MCF 10A (cell line): ENCODE measurements at regions of chr3 and their contacts with region 1.

Region 1: DNA sequence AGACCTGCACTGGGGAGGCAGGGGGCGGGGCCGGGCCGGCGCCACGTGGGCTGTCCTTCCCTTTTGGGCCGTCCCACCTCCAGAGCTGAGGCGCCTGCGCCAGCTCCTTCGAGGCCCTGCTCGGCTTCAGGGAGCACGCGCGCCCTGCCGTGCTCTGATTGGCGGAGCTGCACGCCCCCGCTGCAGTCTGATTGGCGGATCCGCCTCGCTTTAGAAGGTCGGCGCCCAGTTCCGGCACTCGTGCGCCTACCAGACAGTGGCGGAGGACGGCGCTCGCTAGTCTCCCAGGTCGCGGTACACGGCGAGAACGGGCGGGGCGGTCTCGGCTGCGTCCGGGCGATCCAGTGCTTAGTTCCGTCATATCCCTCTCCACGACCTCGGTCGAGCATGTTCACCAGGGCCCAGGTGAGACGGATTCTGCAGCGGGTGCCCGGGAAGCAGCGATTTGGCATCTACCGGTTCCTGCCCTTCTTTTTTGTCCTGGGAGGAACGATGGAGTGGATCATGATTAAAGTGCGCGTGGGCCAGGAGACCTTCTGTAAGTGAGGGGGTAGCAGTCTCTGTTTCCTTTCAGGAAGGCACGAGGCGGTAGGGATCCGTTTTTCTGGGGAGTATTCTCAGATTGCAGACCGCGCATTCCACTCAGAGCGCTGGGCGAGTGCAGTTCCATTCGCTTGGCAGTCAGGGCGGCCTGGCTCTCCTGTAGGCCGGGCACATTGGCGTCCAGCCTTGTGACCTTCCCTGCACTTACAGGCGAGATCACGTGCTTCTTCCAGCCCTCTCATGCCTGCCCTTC is at the start of gene UQCC5:
- DNase-seq: peak; percentile 98
- H3K4me3 Mint-ChIP-seq: peak within 1 kb of the TSS; percentile 84
- H3K27ac Mint-ChIP-seq: peak within 1 kb of the TSS; percentile 96
- H3K4me1 Mint-ChIP-seq: peaks cover 30% of the 10 kb centered on the region
- H3K27me3 Mint-ChIP-seq: no peaks in the 10 kb centered on the region
- CTCF ChIP-seq: no peak
- total RNA-seq, gene UQCC5: 22.6 and 25.9 TPM in 2 replicates

Region 2: GRCh38 chr3:52428151-52429005 is 108.2 kb before region 1 on chr3:
- CTCF ChIA-PET with region 1: no interaction called
- POLR2A ChIA-PET with region 1: no interaction called
- intact Hi-C with region 1: no loop called
- DNase-seq: peak; percentile 83
- H3K4me3 Mint-ChIP-seq: no peak overlapping the region
- H3K27ac Mint-ChIP-seq: no peak overlapping the region
- H3K4me1 Mint-ChIP-seq: no peaks in the 10 kb centered on the region
- H3K27me3 Mint-ChIP-seq: peaks cover 11% of the 10 kb centered on the region
- CTCF ChIP-seq: peak; percentile 63

Region 3: DNA sequence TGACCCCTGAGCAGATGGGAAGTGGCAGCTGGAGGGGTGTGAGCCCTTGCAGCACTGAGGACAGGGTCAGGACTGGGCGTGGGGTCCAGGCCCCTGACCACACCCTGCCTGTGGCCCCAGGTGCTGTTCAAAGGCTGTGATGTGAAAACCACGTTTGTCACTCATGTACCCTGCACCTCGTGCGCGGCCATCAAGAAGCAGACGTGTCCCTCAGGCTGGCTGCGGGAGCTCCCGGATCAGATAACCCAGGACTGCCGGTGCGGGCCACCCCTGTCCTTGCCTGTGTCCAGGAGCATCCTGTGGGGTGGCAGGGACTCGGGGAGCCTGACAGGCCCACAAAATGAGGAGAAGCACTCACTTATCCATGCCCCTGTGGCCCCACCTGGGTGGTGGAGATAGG is 35.5 kb before region 1 on chr3:
- CTCF ChIA-PET with region 1: no interaction called
- POLR2A ChIA-PET with region 1: no interaction called
- intact Hi-C with region 1: no loop called
- DNase-seq: no peak
- H3K4me3 Mint-ChIP-seq: no peak overlapping the region
- H3K27ac Mint-ChIP-seq: no peak overlapping the region
- H3K4me1 Mint-ChIP-seq: no peaks in the 10 kb centered on the region
- H3K27me3 Mint-ChIP-seq: no peaks in the 10 kb centered on the region
- CTCF ChIP-seq: no peak

Region 4: DNA sequence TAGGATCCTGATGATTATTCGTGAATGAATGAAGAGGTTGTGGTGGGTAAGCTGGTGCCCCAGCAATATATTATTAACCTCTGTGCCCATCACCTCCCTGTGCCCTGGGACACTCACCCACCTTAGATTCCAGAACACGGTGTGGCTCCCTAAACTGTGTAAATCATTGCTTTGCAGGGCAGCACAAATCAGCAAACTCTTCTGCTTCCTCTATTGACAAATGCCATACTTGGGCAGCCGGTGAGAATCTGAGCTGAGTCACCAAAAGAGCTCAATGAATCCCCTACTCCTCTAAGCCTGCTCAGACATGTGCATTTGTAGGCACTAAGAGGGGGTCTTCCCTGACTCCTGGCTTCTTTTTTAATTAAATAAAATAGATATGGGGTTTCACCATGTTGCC is 15.5 kb after region 1 on chr3:
- CTCF ChIA-PET with region 1: interaction called, 4 read pairs
- POLR2A ChIA-PET with region 1: interaction called, 16 read pairs
- intact Hi-C with region 1: no loop called
- DNase-seq: no peak
- H3K4me3 Mint-ChIP-seq: no peak overlapping the region
- H3K27ac Mint-ChIP-seq: peak overlapping the region; percentile 51
- H3K4me1 Mint-ChIP-seq: no peaks in the 10 kb centered on the region
- H3K27me3 Mint-ChIP-seq: no peaks in the 10 kb centered on the region
- CTCF ChIP-seq: no peak

Region 5: GRCh38 chr3:52670621-52671521 is 134.3 kb after region 1 on chr3:
- CTCF ChIA-PET with region 1: no interaction called
- POLR2A ChIA-PET with region 1: interaction called, 9 read pairs
- intact Hi-C with region 1: loop called (anchors 2 kb)
- DNase-seq: peak; percentile 98
- H3K4me3 Mint-ChIP-seq: peak overlapping the region; percentile 72
- H3K27ac Mint-ChIP-seq: peak overlapping the region; percentile 96
- H3K4me1 Mint-ChIP-seq: peaks cover 28% of the 10 kb centered on the region
- H3K27me3 Mint-ChIP-seq: no peaks in the 10 kb centered on the region
- CTCF ChIP-seq: no peak